ENCODE measurements at regions of chr12 and their contacts with region 1.

Region 1: DNA sequence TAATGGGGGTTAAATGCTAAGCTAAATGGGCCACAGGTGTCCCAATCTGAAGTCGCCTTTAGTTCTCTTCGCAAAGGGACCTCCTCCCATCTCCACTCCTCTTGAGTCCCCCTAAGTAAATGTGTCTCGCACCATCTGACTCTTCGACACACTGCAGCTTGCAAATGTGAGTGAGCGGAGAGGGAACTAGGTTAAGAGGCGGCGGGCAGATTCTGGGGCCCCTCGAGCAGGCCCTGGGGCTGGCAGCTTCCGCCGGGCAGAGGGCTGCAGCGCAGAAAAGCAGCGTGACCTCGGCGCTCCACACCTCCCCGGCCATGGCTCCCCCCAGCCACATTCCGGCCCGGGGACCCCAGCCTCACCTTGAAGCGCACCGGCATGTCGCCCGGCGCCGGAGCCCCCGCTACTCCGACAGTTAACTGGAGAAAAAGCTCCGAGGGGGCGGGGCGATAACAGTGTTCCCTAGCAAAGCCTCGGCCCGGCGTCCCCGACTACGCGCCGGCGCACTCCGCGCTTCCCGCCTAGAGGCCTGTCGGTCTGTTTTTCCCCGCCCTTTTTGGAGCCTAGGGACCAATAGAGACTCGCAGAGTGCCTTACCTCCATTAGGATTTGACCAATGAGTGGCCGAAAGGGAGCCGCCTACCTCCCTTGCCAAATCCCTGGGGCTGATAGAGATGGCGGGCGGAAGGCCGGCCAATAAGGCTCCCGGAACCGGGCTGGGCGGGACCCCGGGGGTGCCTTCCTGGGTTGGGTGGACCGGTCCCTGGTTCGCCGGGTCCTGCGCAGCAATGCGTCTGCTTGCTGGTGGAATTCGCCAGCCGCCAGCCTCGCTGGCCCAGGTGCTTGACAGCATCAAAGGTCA is at the start of gene MDM1:
- DNase-seq: peak; percentile 93 to 100 (median 97)

Region 2: DNA sequence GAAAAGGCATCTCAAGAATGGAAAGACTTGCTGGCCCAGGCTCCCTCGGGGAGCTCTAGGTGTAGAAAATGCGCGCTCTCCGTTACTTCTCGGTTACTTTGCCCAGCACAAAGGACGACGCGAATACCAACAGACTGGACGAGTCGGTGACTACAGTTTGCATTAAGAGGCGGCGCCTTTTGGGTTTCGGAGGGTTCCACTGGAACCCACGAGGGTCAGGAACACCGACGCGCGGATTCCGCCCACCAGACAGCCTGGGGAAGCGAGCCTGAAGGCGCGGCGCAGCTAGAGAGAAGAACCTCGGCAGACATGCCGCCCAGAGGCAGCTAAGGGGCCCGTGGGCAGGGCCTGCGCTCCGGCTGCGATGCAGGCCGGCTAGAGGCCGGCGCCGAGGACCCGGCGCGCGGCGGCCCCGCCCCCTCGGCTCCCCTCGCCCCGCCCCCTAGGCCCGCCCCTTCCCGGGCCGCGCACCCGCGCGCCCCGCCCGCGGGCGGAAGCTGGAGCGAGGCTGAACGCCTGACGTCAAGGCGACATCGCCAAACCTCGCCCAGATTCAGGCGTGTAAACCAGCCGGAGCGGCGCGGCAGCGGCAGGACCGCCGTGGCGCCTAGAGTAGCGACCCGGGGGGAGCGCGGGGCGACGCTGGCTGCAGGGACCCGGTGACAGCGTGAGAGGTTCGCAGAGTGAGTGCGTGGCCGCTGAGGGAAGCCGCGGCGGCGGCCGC is 278.4 kb after region 1 on chr12 and contains the start of gene RAP1B:
- intact Hi-C with region 1: loop called (anchors 2 kb)
- DNase-seq: peak; percentile 83 to 99 (median 90)

Measured in posterior cingulate gyrus (tissue), 11 donors.